GM10248 (cell line): ENCODE measurements at regions of chr17 and their contacts with region 1.

Region 1: GRCh38 chr17:56960596-56961538 is at the start of gene COIL:
- DNase-seq: peak; percentile 93
- CTCF ChIP-seq: peak; percentile 96

Region 2: GRCh38 chr17:56577843-56578204 is 383.0 kb before region 1 on chr17:
- CTCF ChIA-PET with region 1: no interaction called
- POLR2A ChIA-PET with region 1: no interaction called
- DNase-seq: no peak
- CTCF ChIP-seq: no peak

Region 3: DNA sequence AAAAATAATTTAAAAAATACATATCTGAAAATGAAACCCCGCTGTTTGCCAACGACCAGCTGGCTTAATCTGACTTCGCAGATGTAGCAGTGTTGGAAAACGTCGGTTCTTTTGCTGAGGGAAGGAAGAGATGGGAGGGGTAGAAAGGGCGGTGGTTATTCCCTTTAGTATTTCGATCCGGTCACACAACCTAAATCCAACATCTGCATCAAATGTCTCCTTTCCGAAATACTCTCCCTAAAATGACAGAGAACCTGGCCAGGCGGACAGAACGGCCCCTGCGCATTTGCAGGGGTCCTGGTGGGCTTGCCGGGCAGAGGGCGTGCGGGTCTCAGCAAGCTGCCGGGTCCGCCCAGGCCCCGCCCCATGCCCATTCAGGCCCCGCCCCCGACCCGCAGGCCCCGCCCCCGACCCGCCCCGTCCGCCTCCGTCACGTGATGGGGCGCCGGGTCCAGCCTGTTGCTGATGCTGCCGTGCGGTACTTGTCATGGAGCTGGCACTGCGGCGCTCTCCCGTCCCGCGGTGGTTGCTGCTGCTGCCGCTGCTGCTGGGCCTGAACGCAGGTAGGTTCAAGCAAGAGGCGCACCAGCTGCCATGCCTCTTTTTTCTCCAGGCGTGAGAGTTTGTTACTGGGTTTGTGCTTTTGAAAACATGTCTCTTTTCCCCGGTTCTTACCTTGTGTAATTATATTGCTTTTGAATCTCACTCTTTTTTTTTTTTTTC is 17.0 kb after region 1 on chr17 and contains the start of gene SCPEP1:
- CTCF ChIA-PET with region 1: interaction called, 17 read pairs
- POLR2A ChIA-PET with region 1: no interaction called
- DNase-seq: peak; percentile 96
- CTCF ChIP-seq: no peak